Activated CD4-positive, alpha-beta T cell treated with anti-CD3 and anti-CD28 coated beads, Interleukin-2, amount 10 ng/mL, durations not matched to agents 24 days and 14 days (primary cell): ENCODE measurements at regions of chr4 and their contacts with region 1.

Region 1: GRCh38 chr4:112938461-112939058 is 110.9 kb upstream of the ANK2 start:
- DNase-seq: no peak
- H3K4me3 Mint-ChIP-seq: no peak overlapping the region
- H3K27ac Mint-ChIP-seq: no peak overlapping the region
- H3K4me1 Mint-ChIP-seq: no peaks in the 10 kb centered on the region
- H3K27me3 Mint-ChIP-seq: peaks cover 8% of the 10 kb centered on the region

Region 2: DNA sequence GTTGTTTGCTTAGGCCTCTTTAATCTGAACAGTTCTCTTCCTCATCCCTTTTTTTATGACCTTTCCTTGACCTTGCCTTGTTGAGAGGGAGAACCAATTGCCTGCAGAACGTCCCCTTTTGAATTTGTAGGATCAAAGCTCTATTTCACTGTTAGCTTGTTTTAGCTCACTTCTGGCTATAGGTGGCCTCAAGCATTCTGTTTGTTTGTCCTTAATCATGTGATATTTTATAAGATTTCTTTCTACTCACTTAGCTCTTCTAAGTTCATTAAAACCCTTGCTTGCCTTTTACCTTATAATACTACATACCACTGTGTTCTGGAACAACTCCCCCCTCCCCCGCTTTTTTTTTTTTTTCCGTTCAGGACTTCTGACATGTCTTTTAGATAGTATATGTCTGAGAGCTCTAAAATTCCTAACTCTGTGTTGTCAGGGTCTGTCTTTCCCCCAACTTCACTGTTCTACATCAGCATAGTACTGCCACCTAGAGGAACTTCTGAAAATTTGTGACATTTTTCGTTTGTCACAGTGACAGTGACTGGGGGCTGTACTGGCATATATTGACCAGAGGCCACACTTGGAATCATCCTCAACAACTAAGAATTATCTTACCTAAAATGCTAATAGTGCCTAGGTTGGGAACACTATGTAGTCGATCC is 173.1 kb before region 1 on chr4:
- intact Hi-C with region 1: loop called (anchors 1 kb)
- DNase-seq: no peak
- H3K4me3 Mint-ChIP-seq: no peak overlapping the region
- H3K27ac Mint-ChIP-seq: no peak overlapping the region
- H3K4me1 Mint-ChIP-seq: peaks cover 2% of the 10 kb centered on the region
- H3K27me3 Mint-ChIP-seq: no peaks in the 10 kb centered on the region

Region 3: GRCh38 chr4:112994732-112995464 is 56.3 kb after region 1 on chr4:
- intact Hi-C with region 1: no loop called
- DNase-seq: no peak
- H3K4me3 Mint-ChIP-seq: no peak overlapping the region
- H3K27ac Mint-ChIP-seq: no peak overlapping the region
- H3K4me1 Mint-ChIP-seq: no peaks in the 10 kb centered on the region
- H3K27me3 Mint-ChIP-seq: peaks cover 2% of the 10 kb centered on the region